Activated CD4-positive, alpha-beta memory T cell treated with anti-CD3 and anti-CD28 coated beads for 36 hours (primary cell): ENCODE measurements at regions of chr1 and their contacts with region 1.

Region 1: GRCh38 chr1:150186789-150187559 is 37.3 kb downstream of the PLEKHO1 start:
- DNase-seq: peak; percentile 19
- H3K4me3 Mint-ChIP-seq: peak overlapping the region; percentile 44
- H3K27ac Mint-ChIP-seq: peak overlapping the region; percentile 56
- H3K4me1 Mint-ChIP-seq: peaks cover 14% of the 10 kb centered on the region
- H3K27me3 Mint-ChIP-seq: no peaks in the 10 kb centered on the region

Region 2: DNA sequence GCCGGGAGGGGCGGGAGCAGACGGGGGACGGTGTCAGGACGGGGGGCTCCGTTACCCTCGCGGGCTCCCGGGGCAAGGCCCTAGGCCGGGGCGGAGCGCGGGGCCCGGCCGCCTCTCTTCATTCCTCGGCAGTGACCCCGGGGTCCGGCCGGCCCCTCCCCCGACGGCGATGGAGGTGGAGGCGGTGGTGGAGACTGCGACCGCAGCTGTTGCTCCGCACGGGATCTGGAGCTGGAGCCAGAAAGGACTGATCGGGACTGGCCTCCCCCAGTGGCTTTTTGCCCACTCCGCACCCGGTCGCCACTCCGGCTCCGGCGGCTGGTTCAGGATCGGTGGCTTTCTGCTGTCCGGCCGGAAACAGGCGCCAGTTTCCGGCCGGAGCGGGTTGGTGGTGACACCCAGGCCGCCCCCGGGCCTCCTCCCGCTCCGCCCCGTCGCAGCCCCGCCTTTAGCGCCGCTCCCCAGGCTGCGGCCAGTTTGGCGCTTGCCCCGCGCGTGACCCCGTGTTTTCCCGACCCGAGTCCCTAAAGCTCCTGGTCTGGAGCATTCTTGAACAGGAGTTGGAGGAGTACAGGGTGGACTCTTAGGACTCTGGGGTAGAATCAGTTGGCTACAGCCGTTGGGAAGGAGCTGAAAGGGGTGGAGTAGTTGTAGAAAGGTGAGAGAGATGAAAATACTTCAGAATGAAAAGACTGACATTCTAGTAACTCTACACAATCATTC is 176.4 kb before region 1 on chr1 and contains the start of gene OTUD7B:
- CTCF ChIA-PET with region 1: interaction called, 19 read pairs
- POLR2A ChIA-PET with region 1: no interaction called
- intact Hi-C with region 1: no loop called
- DNase-seq: peak; percentile 87
- H3K4me3 Mint-ChIP-seq: peak within 1 kb of the TSS; percentile 99
- H3K27ac Mint-ChIP-seq: peak within 1 kb of the TSS; percentile 98
- H3K4me1 Mint-ChIP-seq: peaks cover 39% of the 10 kb centered on the region
- H3K27me3 Mint-ChIP-seq: no peaks in the 10 kb centered on the region
- total RNA-seq, gene OTUD7B: 23.8 to 24.7 TPM

Region 3: GRCh38 chr1:150072959-150073358 is 114.0 kb before region 1 on chr1:
- CTCF ChIA-PET with region 1: interaction called, 73 read pairs
- POLR2A ChIA-PET with region 1: no interaction called
- intact Hi-C with region 1: loop called (anchors 1 kb)
- DNase-seq: no peak
- H3K4me3 Mint-ChIP-seq: no peak overlapping the region
- H3K27ac Mint-ChIP-seq: no peak overlapping the region
- H3K4me1 Mint-ChIP-seq: peaks cover 30% of the 10 kb centered on the region
- H3K27me3 Mint-ChIP-seq: no peaks in the 10 kb centered on the region

Region 4: GRCh38 chr1:150162862-150163706 is 23.9 kb before region 1 on chr1:
- CTCF ChIA-PET with region 1: interaction called, 19 read pairs
- POLR2A ChIA-PET with region 1: interaction called, 4 read pairs
- intact Hi-C with region 1: no loop called
- DNase-seq: no peak
- H3K4me3 Mint-ChIP-seq: no peak overlapping the region
- H3K27ac Mint-ChIP-seq: no peak overlapping the region
- H3K4me1 Mint-ChIP-seq: peaks cover 34% of the 10 kb centered on the region
- H3K27me3 Mint-ChIP-seq: no peaks in the 10 kb centered on the region

Region 5: GRCh38 chr1:150176593-150176992 is 10.4 kb before region 1 on chr1:
- CTCF ChIA-PET with region 1: interaction called, 18 read pairs
- POLR2A ChIA-PET with region 1: interaction called, 3 read pairs
- intact Hi-C with region 1: no loop called
- DNase-seq: no peak
- H3K4me3 Mint-ChIP-seq: no peak overlapping the region
- H3K27ac Mint-ChIP-seq: no peak overlapping the region
- H3K4me1 Mint-ChIP-seq: no peaks in the 10 kb centered on the region
- H3K27me3 Mint-ChIP-seq: no peaks in the 10 kb centered on the region

Region 6: GRCh38 chr1:150321826-150322166 is 134.8 kb after region 1 on chr1:
- CTCF ChIA-PET with region 1: no interaction called
- POLR2A ChIA-PET with region 1: no interaction called
- intact Hi-C with region 1: no loop called
- DNase-seq: no peak
- H3K4me3 Mint-ChIP-seq: peak overlapping the region; percentile 99
- H3K27ac Mint-ChIP-seq: peak overlapping the region; percentile 97
- H3K4me1 Mint-ChIP-seq: peaks cover 27% of the 10 kb centered on the region
- H3K27me3 Mint-ChIP-seq: no peaks in the 10 kb centered on the region

Region 7: DNA sequence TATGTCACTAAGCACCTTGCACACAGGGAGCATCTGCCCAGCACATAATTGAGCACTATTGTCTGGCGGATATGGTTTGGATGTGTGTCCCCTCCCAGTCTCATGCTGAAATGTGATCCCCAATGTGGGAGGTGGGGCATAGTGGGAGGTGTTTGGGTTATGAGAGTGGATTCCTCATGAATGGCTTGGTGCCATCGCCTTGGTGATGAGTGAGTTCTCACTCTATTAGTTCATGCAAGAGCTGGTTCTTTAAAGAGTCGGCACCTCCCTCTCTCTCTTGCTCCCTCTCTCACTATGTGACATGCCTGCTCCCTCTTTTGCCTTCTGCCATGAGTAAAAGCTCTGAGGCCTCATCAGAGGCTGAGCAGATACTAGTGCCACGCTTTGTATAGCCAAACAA is 611.6 kb after region 1 on chr1:
- CTCF ChIA-PET with region 1: no interaction called
- POLR2A ChIA-PET with region 1: no interaction called
- intact Hi-C with region 1: no loop called
- DNase-seq: no peak
- H3K4me3 Mint-ChIP-seq: no peak overlapping the region
- H3K27ac Mint-ChIP-seq: no peak overlapping the region
- H3K4me1 Mint-ChIP-seq: no peaks in the 10 kb centered on the region
- H3K27me3 Mint-ChIP-seq: no peaks in the 10 kb centered on the region